T-cell (primary cell): ENCODE measurements at regions of chr6 and their contacts with region 1.

Region 1: GRCh38 chr6:24699521-24700359 is 19.2 kb downstream of the C6orf62 start:
- DNase-seq: no peak
- ATAC-seq: no peak
- H3K4me3 ChIP-seq: no peak overlapping the region
- H3K4me3 Mint-ChIP-seq: no peak overlapping the region
- H3K27ac ChIP-seq: no peak overlapping the region
- H3K27ac Mint-ChIP-seq: peak overlapping the region; percentile 35 to 40
- H3K4me1 ChIP-seq: no peaks in the 10 kb centered on the region
- H3K4me1 Mint-ChIP-seq: peaks cover 24 to 33% (median 30%) of the 10 kb centered on the region in 3 donors
- H3K27me3 ChIP-seq: no peaks in the 10 kb centered on the region
- H3K27me3 Mint-ChIP-seq: no peaks in the 10 kb centered on the region

Region 2: DNA sequence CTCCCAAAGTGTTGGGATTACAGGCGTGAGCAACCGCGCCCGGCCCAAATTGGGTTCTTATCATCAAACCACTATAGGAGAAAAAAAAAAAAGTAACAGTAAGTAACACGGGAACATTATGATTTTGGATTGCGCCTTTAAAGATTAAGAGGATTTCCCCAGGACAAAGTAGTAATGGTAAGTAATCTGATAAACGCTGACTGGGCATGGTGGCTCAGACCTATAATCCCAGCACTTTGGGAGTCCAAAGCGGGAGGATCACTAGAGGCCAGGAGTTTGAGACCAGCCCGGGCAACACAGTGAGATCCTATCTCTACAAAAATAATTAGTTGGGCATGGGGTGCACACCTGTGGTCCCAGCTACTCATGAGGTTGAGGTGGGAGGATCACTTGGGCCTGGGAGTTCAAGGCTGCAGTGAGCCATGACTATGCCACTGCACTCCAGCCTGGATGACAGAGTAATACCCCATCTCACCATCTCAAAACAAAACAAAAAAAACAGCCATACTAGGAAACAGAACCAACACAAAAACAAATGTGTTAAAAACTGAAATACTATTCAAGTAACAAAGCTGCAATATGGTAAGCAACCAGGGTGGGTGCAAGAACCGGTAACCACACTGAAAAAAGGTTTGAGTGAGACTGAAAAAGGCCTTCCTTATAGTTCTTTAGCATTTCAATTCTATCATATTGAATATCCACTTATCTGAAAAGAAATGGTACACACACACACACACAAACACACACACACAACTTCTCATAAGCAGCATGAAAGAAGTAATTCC is 11.0 kb after region 1 on chr6:
- CTCF ChIA-PET with region 1: interaction called in 1 of 2 experiments, 10 read pairs
- POLR2A ChIA-PET with region 1: interaction called, 3 to 4 read pairs
- DNase-seq: no peak
- ATAC-seq: peak in 1 of 4 experiments; percentile 12
- H3K4me3 ChIP-seq: no peak overlapping the region
- H3K4me3 Mint-ChIP-seq: peak overlapping the region in 2 of 3 donors; percentile 7 to 40
- H3K27ac ChIP-seq: no peak overlapping the region
- H3K27ac Mint-ChIP-seq: peak overlapping the region; percentile 61 to 85
- H3K4me1 ChIP-seq: peaks cover 18 to 24% of the 10 kb centered on the region in 2 experiments
- H3K4me1 Mint-ChIP-seq: peaks cover 53 to 62% (median 62%) of the 10 kb centered on the region in 3 donors
- H3K27me3 ChIP-seq: no peaks in the 10 kb centered on the region
- H3K27me3 Mint-ChIP-seq: no peaks in the 10 kb centered on the region

Region 3: GRCh38 chr6:24720131-24720603 is 20.4 kb after region 1 on chr6:
- CTCF ChIA-PET with region 1: no interaction called
- POLR2A ChIA-PET with region 1: interaction called in 1 of 2 experiments, 10 read pairs
- DNase-seq: peak; percentile 42 to 90 (median 73)
- ATAC-seq: peak; percentile 7 to 36 (median 23)
- H3K4me3 ChIP-seq: peak overlapping the region; percentile 99 to 100
- H3K4me3 Mint-ChIP-seq: peak overlapping the region; percentile 81 to 100 (median 92)
- H3K27ac ChIP-seq: peak overlapping the region; percentile 99
- H3K27ac Mint-ChIP-seq: peak overlapping the region; percentile 98 to 100
- H3K4me1 ChIP-seq: peaks cover 33 to 37% of the 10 kb centered on the region in 2 experiments
- H3K4me1 Mint-ChIP-seq: peaks cover 43 to 54% (median 43%) of the 10 kb centered on the region in 3 donors
- H3K27me3 ChIP-seq: no peaks in the 10 kb centered on the region
- H3K27me3 Mint-ChIP-seq: no peaks in the 10 kb centered on the region

Region 4: DNA sequence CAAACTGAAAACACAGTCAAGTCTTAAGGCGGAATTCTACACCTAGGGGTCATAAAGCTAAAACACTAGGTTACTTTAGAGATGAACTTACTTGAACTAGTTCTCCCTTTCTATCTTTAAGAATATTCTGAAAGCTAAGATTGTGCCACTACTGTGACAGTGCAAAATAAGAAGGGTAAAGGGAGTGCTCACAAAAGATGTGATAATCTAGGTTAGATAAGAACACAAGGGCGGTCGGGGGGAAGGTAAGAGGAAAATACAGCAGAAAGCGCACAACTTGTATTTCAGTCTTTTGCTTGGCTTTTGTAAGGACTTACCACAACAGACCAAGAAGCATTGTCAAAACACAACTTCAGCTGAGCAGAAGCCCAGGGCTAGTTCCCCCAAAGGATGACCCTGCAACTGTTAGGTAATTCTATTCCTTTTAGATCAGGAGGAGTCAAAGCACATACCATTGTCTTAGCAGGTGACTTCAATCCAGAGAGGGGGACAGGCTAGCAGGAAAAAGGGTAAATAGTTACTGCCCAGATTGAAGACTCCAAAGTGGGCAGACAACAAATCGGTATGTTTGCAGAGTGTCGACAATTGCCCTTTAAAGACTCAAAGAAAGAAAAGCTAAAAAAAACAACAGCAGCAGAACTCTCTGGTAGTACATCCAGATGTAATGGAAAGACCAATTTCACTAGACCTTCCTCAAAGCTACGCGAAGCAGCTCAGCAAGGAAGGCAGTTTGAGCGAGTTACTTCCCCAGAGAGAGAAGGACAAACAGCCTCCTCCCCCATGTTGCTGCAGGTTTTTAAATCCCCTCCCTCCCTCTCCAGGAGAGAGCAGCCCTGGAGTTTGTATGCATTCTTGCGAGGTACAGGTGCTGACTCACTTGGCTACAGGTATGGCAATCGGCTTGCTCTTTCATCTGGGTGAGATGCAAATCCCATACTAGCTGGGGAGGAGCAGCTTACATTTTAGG is 177.0 kb after region 1 on chr6:
- CTCF ChIA-PET with region 1: no interaction called
- POLR2A ChIA-PET with region 1: no interaction called
- DNase-seq: no peak
- ATAC-seq: peak in 1 of 4 experiments; percentile 11
- H3K4me3 ChIP-seq: no peak overlapping the region
- H3K4me3 Mint-ChIP-seq: peak overlapping the region in 2 of 3 donors; percentile 8 to 30
- H3K27ac ChIP-seq: peak overlapping the region; percentile 19
- H3K27ac Mint-ChIP-seq: peak overlapping the region; percentile 75 to 80
- H3K4me1 ChIP-seq: peaks cover 29 to 38% of the 10 kb centered on the region in 2 experiments
- H3K4me1 Mint-ChIP-seq: peaks cover 90 to 92% (median 91%) of the 10 kb centered on the region in 3 donors
- H3K27me3 ChIP-seq: no peaks in the 10 kb centered on the region
- H3K27me3 Mint-ChIP-seq: no peaks in the 10 kb centered on the region